ENCODE measurements at regions of chr7 and their contacts with region 1.

Region 1: DNA sequence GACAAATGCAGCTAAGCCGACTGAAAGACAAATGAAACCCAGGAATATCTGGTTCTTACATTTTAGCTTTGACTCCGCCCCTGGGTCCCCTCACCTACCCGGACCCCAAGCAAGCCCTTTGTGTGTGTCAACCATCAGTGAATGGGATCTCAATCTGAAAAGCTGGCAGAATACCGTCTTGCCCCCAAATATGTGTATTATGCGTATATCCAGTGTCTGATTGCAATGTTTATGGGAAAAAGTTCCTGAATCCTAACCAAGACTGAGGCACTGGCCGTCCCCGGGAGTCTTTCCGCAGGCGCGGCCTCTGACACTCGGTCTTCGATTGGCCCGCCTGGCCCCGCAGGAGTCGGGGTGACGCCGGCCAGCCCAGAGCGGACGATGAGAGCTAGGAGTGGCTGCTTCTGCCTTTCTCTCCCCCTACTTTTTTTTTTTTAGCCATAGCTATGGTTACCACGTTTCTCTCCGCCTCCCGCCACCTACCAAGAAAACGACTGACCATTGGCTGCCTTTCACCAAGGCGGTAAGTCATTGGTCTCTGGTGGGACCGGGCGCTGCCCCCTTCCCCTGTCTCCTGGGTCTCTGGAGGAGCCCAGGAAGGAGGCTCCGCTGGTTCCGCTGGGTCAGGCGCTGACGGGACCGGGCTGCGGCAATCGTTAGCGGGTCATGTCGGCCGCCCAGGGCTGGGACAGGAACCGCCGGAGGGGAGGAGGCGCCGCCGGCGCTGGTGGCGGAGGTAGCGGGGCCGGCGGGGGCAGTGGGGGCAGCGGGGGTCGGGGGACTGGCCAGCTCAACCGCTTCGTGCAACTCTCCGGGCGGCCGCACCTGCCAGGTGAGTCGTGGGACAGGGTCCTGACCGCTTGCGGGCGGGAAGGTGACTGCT is at the start of gene KLHDC10:
- DNase-seq: peak; percentile 99
- ATAC-seq: peak; percentile 99
- H3K4me3 ChIP-seq: peak within 1 kb of the TSS; percentile 82 to 91
- H3K27ac ChIP-seq: peak within 1 kb of the TSS; percentile 87
- H3K4me1 ChIP-seq: peaks cover 26% of the 10 kb centered on the region
- H3K27me3 ChIP-seq: no peaks in the 10 kb centered on the region
- CTCF ChIP-seq: no peak
- total RNA-seq, gene KLHDC10: 26.7 TPM

Region 2: GRCh38 chr7:130047821-130048220 is 22.4 kb before region 1 on chr7:
- CTCF ChIA-PET with region 1: no interaction called
- POLR2A ChIA-PET with region 1: interaction called, 12 read pairs
- in situ Hi-C with region 1: no loop called
- intact Hi-C with region 1: no loop called
- DNase-seq: no peak
- ATAC-seq: no peak
- H3K4me3 ChIP-seq: no peak overlapping the region
- H3K27ac ChIP-seq: no peak overlapping the region
- H3K4me1 ChIP-seq: peaks cover 5% of the 10 kb centered on the region; the same call in 1 of the 2 replicates
- H3K27me3 ChIP-seq: no peaks in the 10 kb centered on the region
- CTCF ChIP-seq: no peak

Region 3: GRCh38 chr7:130379921-130380860 is 310.0 kb after region 1 on chr7 and contains the start of gene CPA1:
- CTCF ChIA-PET with region 1: no interaction called
- POLR2A ChIA-PET with region 1: no interaction called
- in situ Hi-C with region 1: no loop called
- intact Hi-C with region 1: loop called (anchors 10 kb)
- DNase-seq: no peak
- ATAC-seq: peak; percentile 26; the same call in 1 of the 2 replicates
- H3K4me3 ChIP-seq: no peak within 1 kb of the TSS
- H3K27ac ChIP-seq: no peak within 1 kb of the TSS
- H3K4me1 ChIP-seq: no peaks in the 10 kb centered on the region
- H3K27me3 ChIP-seq: no peaks in the 10 kb centered on the region
- CTCF ChIP-seq: no peak
- total RNA-seq, gene CPA1: 7.6 TPM

Region 4: DNA sequence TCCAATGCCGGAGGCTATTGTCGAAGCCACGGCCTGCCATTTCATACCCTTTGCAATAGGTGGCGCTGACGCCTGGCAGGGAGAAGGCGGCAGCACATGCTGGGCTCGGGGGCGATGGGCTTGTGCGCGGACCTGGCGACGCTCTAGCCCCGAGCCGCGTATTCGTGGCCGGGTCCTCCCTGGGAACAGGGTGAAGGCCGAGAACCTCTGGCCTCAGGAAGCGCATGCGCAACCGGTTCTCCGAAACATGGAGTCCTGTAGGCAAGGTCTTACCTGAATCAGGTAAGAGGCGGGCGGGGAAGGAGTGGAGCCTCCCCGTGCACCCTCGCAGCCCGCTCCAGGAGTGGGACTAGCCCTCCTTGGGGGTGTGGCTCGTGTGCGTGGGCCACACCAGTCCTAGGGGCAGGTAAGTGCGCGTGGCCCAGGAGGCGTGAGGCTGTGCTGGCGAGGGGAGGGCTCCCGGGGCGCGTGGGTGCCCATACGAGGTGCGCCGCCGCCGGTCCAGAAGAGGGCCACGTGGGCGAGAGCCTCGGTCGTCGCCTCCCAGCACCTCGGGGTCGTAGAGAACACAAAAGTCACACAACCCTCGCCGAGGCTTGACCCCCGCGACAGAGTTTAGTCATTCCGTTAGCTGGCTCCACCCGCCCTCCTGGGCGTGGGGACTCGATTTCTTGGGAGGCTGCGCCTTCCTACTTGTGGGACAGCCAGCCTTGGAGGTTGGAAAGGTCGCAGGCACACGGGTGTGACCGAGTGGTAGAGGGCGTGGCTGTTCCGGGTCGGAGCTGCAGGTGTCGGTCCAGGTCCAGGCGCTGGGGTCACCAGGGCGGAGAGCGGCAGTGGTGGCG is 416.1 kb after region 1 on chr7:
- CTCF ChIA-PET with region 1: no interaction called
- POLR2A ChIA-PET with region 1: no interaction called
- in situ Hi-C with region 1: no loop called
- intact Hi-C with region 1: loop called (anchors 10 kb)
- DNase-seq: peak; percentile 70
- ATAC-seq: peak; percentile 87
- H3K4me3 ChIP-seq: peak overlapping the region; percentile 62 to 82
- H3K27ac ChIP-seq: peak overlapping the region; percentile 76
- H3K4me1 ChIP-seq: peaks cover 25% of the 10 kb centered on the region
- H3K27me3 ChIP-seq: no peaks in the 10 kb centered on the region
- CTCF ChIP-seq: peak; percentile 95

Region 5: DNA sequence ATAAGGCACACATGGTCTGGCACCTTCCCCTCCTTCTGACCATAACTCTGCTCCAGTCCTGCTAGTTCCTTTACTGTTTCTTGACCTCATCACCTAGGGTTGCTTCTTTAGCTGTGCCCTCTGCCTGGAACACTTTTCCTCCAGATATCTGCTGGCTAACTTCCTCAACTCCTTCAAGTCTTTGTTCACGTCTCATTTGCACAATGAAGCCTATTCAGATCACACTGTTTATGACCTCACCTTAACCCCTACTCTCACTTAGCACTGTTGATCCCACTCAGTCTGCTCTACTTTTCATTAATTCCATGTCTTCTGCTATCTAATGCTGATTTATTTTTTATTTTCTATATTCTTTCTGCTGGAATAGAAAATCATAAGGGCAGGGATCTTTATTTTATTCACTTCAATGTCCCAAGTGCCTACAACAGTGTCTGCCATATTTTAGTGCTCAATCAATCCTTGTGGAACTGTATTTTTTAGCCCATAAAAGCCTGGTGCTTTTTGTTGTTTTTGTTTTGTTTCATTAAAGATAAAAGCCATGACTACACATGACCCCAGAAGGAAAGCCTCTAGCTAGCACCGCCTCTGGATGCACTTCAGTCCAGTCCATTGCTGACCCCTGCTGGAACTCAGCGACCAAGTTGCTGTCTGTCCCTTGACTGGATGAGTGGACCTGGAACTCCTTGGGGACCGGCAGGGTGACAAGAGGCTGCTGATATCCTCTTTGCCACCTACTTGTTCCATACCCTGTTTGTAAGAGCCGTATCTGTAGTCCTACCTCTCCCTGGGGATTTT is 651.5 kb after region 1 on chr7:
- CTCF ChIA-PET with region 1: interaction called, 3 read pairs
- POLR2A ChIA-PET with region 1: no interaction called
- in situ Hi-C with region 1: no loop called
- intact Hi-C with region 1: loop called (anchors 10 kb)
- DNase-seq: peak; percentile 30
- ATAC-seq: peak; percentile 98
- H3K4me3 ChIP-seq: no peak overlapping the region
- H3K27ac ChIP-seq: no peak overlapping the region
- H3K4me1 ChIP-seq: no peaks in the 10 kb centered on the region
- H3K27me3 ChIP-seq: peaks cover 28% of the 10 kb centered on the region; the same call in 1 of the 2 replicates
- CTCF ChIP-seq: peak; percentile 81

Region 6: DNA sequence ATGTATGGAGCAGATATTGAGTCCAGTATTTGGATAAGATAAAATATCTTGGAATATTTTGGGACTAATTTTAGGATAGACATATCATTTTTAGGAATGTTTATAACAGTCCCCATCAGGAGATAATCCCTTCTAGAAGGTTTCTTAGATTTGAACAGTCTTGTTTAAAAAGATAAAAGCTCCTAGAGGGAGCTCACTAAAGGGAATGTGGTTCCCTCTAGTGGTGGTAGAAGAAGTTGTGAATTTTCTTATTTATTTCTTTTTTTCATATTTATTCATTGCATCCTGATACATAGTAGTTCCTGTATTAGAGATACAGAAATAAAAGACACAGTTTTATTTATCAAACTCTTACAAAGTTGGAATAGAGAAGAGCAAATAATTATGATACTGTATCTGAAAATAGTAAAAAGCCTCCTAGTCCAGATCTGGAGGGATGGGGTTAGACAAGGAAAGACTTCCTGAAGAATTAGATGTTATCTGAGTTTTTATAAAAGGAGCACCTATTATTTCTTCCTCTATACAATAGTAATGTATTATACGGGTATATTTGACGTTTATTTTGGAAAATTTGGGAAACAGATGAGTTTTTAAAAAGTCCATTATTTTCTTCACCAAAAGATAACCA is 688.3 kb after region 1 on chr7:
- CTCF ChIA-PET with region 1: interaction called, 11 read pairs
- POLR2A ChIA-PET with region 1: interaction called, 3 read pairs
- in situ Hi-C with region 1: no loop called
- intact Hi-C with region 1: no loop called
- DNase-seq: peak; percentile 33
- ATAC-seq: peak; percentile 56; the same call in 1 of the 2 replicates
- H3K4me3 ChIP-seq: no peak overlapping the region
- H3K27ac ChIP-seq: no peak overlapping the region
- H3K4me1 ChIP-seq: no peaks in the 10 kb centered on the region
- H3K27me3 ChIP-seq: no peaks in the 10 kb centered on the region
- CTCF ChIP-seq: peak; percentile 76; the same call in 1 of the 2 replicates

Region 7: GRCh38 chr7:130831817-130832481 is 761.7 kb after region 1 on chr7:
- CTCF ChIA-PET with region 1: interaction called, 7 read pairs
- POLR2A ChIA-PET with region 1: no interaction called
- in situ Hi-C with region 1: no loop called
- intact Hi-C with region 1: loop called (anchors 5 kb)
- DNase-seq: no peak
- ATAC-seq: no peak
- H3K4me3 ChIP-seq: no peak overlapping the region
- H3K27ac ChIP-seq: no peak overlapping the region
- H3K4me1 ChIP-seq: no peaks in the 10 kb centered on the region
- H3K27me3 ChIP-seq: no peaks in the 10 kb centered on the region
- CTCF ChIP-seq: peak; percentile 79; the same call in 1 of the 2 replicates

Measured in Panc1 (cell line).